Activated CD4-positive, alpha-beta T cell treated with anti-CD3 and anti-CD28 coated beads for 36 hours (primary cell): ENCODE measurements at regions of chr5 and their contacts with region 1.

Region 1: DNA sequence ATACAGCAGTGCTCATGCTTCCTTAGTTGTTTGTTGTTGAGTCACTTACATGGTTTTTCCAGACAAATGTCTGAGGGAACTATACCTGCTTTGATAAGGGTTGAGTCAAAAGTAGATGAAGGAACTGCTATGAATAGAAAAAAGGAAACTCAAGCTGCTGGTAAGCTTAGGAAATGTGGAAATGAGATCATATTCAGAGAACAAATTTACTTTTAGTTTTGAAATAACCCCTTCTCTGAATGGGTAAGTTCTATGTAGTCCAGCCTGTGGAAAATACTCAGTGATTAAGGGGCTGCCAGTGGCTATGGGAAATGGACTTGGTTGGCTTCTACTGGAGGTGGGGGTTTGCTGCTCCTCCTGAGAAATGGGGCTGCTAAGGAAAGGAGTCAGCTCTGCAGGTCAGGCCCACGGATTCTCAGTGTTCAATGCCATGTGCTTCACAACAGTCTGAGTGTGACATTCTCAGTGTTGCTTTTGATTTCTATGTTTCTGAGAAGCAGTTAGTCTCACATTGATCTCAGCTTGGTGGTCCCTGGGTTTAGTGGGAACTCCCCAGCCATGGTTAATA is 47.7 kb upstream of the GLRX start:
- DNase-seq: peak; percentile 70
- ATAC-seq: peak; percentile 78
- H3K4me3 Mint-ChIP-seq: peak overlapping the region; percentile 63
- H3K27ac Mint-ChIP-seq: peak overlapping the region; percentile 98
- H3K4me1 Mint-ChIP-seq: peaks cover 62% of the 10 kb centered on the region
- H3K27me3 Mint-ChIP-seq: no peaks in the 10 kb centered on the region

Region 2: GRCh38 chr5:95822542-95823181 is 47.5 kb before region 1 on chr5 and contains the start of gene GLRX:
- CTCF ChIA-PET with region 1: no interaction called
- POLR2A ChIA-PET with region 1: interaction called, 3 read pairs
- intact Hi-C with region 1: loop called in 1 of 2 experiments (anchors 2 kb)
- DNase-seq: peak; percentile 68
- ATAC-seq: peak; percentile 18
- H3K4me3 Mint-ChIP-seq: peak within 1 kb of the TSS; percentile 92
- H3K27ac Mint-ChIP-seq: peak within 1 kb of the TSS; percentile 92
- H3K4me1 Mint-ChIP-seq: peaks cover 62% of the 10 kb centered on the region
- H3K27me3 Mint-ChIP-seq: no peaks in the 10 kb centered on the region
- total RNA-seq, gene GLRX: 21.0 to 31.5 TPM

Region 3: DNA sequence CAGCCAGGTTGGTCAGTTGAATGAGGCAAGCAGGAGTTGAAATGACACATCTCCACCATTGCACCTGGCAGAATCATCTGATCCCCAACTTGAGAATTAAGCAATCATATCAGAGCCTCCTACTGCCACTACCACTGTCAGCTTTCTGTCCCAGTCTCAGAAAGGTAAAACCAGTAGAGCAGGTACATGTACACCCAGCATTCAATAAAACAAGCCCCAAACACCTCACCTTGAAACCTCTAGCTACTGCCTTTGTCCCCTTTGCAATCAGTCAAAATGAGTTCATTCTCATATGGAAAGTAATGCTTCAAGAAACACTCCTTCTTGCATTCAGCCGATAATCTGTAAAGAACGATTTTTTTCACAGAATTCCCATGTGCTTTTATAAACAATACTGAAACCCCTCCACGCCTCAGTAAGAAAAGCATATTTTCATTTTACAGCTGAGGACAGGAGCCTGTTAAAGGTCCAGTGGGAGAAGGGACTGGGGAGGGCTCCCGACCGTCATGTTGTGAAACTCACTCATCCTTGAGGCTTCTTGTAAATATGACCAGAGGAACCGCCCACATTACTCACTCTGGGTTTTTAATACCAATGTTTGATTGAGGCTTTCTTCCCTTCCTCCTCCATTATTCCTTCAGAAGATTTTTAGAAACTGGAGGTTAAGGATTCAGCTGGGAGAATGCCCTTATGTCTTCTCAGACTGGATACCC is 13.6 kb after region 1 on chr5:
- CTCF ChIA-PET with region 1: no interaction called
- POLR2A ChIA-PET with region 1: no interaction called
- intact Hi-C with region 1: no loop called
- DNase-seq: no peak
- ATAC-seq: peak; percentile 41
- H3K4me3 Mint-ChIP-seq: no peak overlapping the region
- H3K27ac Mint-ChIP-seq: peak overlapping the region; percentile 1
- H3K4me1 Mint-ChIP-seq: peaks cover 10% of the 10 kb centered on the region
- H3K27me3 Mint-ChIP-seq: no peaks in the 10 kb centered on the region

Region 4: GRCh38 chr5:96113170-96113939 is 243.2 kb after region 1 on chr5:
- CTCF ChIA-PET with region 1: no interaction called
- POLR2A ChIA-PET with region 1: interaction called, 4 read pairs
- intact Hi-C with region 1: loop called in 1 of 2 experiments (anchors 2 kb)
- DNase-seq: no peak
- ATAC-seq: peak; percentile 71
- H3K4me3 Mint-ChIP-seq: no peak overlapping the region
- H3K27ac Mint-ChIP-seq: peak overlapping the region; percentile 84
- H3K4me1 Mint-ChIP-seq: peaks cover 35% of the 10 kb centered on the region
- H3K27me3 Mint-ChIP-seq: peaks cover 3% of the 10 kb centered on the region

Region 5: GRCh38 chr5:96279801-96280542 is 409.8 kb after region 1 on chr5:
- CTCF ChIA-PET with region 1: no interaction called
- POLR2A ChIA-PET with region 1: no interaction called
- intact Hi-C with region 1: loop called (anchors 1 kb)
- DNase-seq: peak; percentile 48
- ATAC-seq: peak; percentile 96
- H3K4me3 Mint-ChIP-seq: no peak overlapping the region
- H3K27ac Mint-ChIP-seq: peak overlapping the region; percentile 35
- H3K4me1 Mint-ChIP-seq: peaks cover 23% of the 10 kb centered on the region
- H3K27me3 Mint-ChIP-seq: peaks cover 30% of the 10 kb centered on the region

Region 6: GRCh38 chr5:96536991-96537785 is 667.0 kb after region 1 on chr5:
- CTCF ChIA-PET with region 1: no interaction called
- POLR2A ChIA-PET with region 1: no interaction called
- intact Hi-C with region 1: loop called (anchors 1 kb)
- DNase-seq: no peak
- ATAC-seq: peak; percentile 86
- H3K4me3 Mint-ChIP-seq: peak overlapping the region; percentile 1
- H3K27ac Mint-ChIP-seq: peak overlapping the region; percentile 82
- H3K4me1 Mint-ChIP-seq: peaks cover 32% of the 10 kb centered on the region
- H3K27me3 Mint-ChIP-seq: no peaks in the 10 kb centered on the region